Activated CD4-positive, alpha-beta memory T cell treated with anti-CD3 and anti-CD28 coated beads for 36 hours (primary cell): ENCODE measurements at regions of chr19 and their contacts with region 1.

Region 1: GRCh38 chr19:44954824-44955586 is at the start of gene CLPTM1:
- DNase-seq: peak; percentile 98
- H3K4me3 Mint-ChIP-seq: peak within 1 kb of the TSS; percentile 97
- H3K27ac Mint-ChIP-seq: peak within 1 kb of the TSS; percentile 95
- H3K4me1 Mint-ChIP-seq: peaks cover 46% of the 10 kb centered on the region
- H3K27me3 Mint-ChIP-seq: no peaks in the 10 kb centered on the region
- total RNA-seq, gene CLPTM1: 43.9 to 45.0 TPM

Region 2: DNA sequence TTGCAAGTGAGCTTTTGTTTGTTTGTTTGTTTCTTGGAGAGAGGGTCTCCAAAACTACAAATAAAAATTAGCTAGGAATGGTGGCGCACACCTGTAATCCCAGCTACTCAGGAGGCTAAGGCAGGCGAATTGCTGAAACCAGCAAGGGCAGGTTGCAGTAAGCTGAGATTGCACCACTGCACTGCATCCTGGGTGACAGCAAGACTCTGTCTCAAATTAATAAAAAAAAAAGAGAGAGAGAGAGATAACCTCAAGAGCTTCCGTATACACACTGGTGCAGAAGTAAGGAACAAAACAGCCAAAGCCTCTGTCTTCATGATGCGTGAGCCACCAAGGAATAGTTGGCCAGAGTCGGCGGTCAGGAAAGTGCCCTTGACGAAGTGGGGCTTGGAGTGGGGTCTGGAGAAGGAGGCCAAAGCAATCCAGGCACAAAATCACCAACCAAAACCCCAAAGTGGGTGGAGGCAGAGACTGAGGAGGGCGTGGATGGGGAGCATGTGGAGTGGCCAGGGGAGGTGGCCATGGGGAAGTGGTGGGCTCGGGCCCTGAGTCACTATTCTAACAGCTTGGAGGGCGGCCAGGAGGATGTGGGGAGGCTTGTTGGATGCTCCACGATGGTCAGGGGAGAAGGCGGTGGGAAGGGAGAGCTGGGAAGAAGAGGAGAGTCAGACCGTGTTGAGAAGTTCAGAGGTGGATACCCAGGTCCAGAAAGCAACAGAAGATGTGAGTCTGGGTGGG is 85.1 kb before region 1 on chr19:
- CTCF ChIA-PET with region 1: no interaction called
- POLR2A ChIA-PET with region 1: no interaction called
- intact Hi-C with region 1: no loop called
- DNase-seq: no peak
- H3K4me3 Mint-ChIP-seq: no peak overlapping the region
- H3K27ac Mint-ChIP-seq: no peak overlapping the region
- H3K4me1 Mint-ChIP-seq: no peaks in the 10 kb centered on the region
- H3K27me3 Mint-ChIP-seq: no peaks in the 10 kb centered on the region

Region 3: DNA sequence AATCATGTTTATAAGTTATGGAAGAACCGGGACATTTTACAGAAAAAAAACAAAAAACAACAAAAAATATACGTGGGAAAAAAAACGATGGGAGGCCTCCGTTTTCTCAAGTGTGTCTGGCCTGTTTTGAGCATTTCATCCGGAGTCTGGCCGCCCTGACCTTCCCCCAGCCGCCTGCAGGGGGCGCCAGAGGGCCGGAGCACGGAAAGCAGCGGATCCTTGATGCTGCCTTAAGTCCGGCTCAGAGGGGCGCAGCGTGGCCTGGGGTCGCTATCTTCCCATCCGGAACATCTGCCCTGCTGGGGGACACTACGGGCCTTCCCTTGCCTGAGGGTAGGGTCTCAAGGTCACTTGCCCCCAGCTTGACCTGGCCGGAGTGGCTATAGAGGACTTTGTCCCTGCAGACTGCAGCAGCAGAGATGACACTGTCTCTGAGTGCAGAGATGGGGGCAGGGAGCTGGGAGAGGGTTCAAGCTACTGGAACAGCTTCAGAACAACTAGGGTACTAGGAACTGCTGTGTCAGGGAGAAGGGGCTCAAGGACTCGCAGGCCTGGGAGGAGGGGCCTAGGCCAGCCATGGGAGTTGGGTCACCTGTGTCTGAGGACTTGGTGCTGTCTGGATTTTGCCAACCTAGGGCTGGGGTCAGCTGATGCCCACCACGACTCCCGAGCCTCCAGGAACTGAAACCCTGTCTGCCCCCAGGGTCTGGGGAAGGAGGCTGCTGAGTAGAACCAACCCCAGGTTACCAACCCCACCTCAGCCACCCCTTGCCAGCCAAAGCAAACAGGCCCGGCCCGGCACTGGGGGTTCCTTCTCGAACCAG is 51.2 kb before region 1 on chr19:
- CTCF ChIA-PET with region 1: interaction called, 21 read pairs
- POLR2A ChIA-PET with region 1: interaction called, 3 read pairs
- intact Hi-C with region 1: loop called (anchors 1 kb)
- DNase-seq: peak; percentile 82
- H3K4me3 Mint-ChIP-seq: no peak overlapping the region
- H3K27ac Mint-ChIP-seq: no peak overlapping the region
- H3K4me1 Mint-ChIP-seq: peaks cover 6% of the 10 kb centered on the region
- H3K27me3 Mint-ChIP-seq: peaks cover 18% of the 10 kb centered on the region

Region 4: DNA sequence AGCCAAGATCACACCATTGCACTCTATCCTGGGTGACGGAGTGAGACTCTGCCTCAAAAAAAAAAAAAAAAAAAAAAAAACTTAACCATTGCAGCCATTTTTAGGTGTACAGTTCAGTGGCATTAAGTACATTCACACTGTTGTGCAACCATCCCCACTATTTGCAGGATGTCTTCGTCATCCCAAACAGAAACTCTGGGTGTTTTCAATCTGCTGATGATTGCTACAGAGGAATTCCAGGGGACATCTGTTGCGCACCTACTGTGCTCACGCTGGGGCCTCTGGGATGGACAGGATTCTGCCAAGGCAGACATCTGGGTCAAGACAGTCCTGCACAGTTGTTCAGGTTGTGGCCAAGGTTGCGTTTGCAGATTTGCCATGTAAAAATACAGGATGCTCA is 15.3 kb before region 1 on chr19:
- CTCF ChIA-PET with region 1: no interaction called
- POLR2A ChIA-PET with region 1: no interaction called
- intact Hi-C with region 1: no loop called
- DNase-seq: no peak
- H3K4me3 Mint-ChIP-seq: no peak overlapping the region
- H3K27ac Mint-ChIP-seq: no peak overlapping the region
- H3K4me1 Mint-ChIP-seq: no peaks in the 10 kb centered on the region
- H3K27me3 Mint-ChIP-seq: no peaks in the 10 kb centered on the region

Region 5: DNA sequence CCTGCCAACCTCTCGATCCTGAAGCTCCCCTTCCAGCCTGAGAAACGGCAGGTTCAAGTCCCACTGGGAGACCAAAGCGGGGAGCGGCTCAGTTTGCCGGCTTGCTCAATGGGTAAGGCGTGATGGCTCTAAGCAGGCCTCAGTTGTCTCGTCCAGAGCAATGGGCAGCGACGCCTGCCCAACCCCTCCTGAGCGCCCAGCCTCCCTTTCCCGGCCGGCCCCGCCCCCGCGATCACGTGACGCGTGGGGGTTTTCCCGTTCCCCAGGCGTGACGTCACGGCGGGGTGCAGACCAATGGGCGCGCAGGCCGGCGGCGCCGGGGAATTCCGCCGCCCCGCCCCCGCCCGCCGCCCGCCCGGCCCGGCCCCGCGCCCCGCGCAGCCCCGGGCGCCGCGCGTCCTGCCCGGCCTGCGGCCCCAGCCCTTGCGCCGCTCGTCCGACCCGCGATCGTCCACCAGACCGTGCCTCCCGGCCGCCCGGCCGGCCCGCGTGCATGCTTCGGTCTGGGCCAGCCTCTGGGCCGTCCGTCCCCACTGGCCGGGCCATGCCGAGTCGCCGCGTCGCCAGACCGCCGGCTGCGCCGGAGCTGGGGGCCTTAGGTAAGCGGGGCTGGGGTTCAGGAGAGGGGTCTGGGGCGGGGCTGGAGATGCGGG is 46.2 kb after region 1 on chr19 and contains the start of gene RELB:
- CTCF ChIA-PET with region 1: no interaction called
- POLR2A ChIA-PET with region 1: interaction called, 6 read pairs
- intact Hi-C with region 1: loop called (anchors 1 kb)
- DNase-seq: peak; percentile 97
- H3K4me3 Mint-ChIP-seq: peak within 1 kb of the TSS; percentile 96
- H3K27ac Mint-ChIP-seq: peak within 1 kb of the TSS; percentile 99
- H3K4me1 Mint-ChIP-seq: peaks cover 22% of the 10 kb centered on the region
- H3K27me3 Mint-ChIP-seq: no peaks in the 10 kb centered on the region
- total RNA-seq, gene RELB: 62.4 to 63.1 TPM

Region 6: DNA sequence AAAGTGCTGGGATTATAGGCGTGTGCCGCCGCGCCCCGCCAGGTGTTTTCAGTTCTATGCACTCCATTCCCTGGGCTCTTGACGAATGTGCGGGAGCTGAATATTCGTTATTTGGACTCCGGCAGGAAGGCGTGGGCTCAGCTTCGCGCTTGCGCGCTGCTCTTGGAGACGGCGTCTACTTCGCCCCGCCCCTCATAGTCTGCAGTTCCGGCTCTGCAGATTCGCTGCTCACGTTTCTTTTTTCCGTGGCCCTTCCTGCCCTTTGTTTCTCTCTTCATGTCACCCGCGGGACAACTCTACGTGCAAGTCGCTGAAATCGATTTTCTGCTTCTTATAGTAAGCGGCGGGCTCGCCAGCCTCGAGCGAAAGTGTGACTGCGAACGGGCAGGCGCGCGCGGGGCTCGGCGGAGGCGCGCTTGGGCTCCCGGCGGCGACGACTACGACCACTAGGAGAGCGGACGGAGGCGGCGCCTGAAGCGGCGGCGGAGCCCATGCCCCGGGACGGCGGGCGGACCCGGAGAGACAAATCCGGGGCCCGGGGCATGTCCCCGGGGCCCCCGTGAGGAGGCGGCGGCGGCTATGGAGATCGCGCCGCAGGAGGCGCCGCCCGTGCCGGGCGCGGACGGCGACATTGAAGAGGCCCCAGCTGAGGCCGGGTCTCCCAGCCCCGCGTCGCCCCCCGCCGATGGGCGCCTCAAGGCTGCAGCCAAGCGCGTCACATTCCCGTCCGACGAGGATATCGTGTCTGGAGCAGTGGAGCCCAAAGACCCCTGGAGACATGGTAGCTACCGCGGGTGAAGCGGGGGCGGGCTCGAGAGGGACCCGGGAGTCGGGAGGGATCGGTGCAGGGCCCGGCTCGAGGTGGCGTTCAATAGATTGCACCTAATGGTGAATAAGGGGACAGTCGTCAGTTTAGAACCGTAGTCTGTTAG is 138.0 kb after region 1 on chr19 and contains the start of gene PPP1R37:
- CTCF ChIA-PET with region 1: interaction called, 3 read pairs
- POLR2A ChIA-PET with region 1: no interaction called
- intact Hi-C with region 1: loop called (anchors 5 kb)
- DNase-seq: peak; percentile 95
- H3K4me3 Mint-ChIP-seq: peak within 1 kb of the TSS; percentile 86
- H3K27ac Mint-ChIP-seq: peak within 1 kb of the TSS; percentile 97
- H3K4me1 Mint-ChIP-seq: peaks cover 46% of the 10 kb centered on the region
- H3K27me3 Mint-ChIP-seq: no peaks in the 10 kb centered on the region
- total RNA-seq, gene PPP1R37: 12.7 to 13.1 TPM